Lower leg skin (tissue), 4 donors: ENCODE measurements at regions of chr3 and their contacts with region 1.

Region 1: DNA sequence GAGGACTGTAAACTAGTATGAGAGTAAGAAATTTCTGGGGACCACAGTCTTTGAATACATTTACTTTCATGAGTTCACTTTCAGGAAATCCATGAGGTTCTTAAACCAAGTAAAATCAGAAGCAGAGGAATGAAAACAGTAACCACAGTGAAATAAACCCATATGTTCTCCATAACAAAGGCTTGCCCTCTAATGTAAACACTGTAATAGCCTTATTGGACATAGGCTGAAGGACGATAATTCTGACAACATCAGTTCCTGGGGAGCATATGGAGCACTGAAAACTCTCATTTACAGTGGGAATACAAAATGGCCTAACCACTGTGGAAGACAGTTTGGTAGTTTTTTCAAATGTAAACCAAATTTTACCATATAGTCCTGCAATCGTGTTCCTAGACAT is 965.8 kb downstream of the NSUN3 start:
- DNase-seq: no peak
- H3K4me3 ChIP-seq: no peak overlapping the region
- CTCF ChIP-seq: no peak
- POLR2A ChIP-seq: no peak

Region 2: GRCh38 chr3:94876270-94876669 is 152.4 kb before region 1 on chr3:
- intact Hi-C with region 1: loop called (anchors 2 kb)
- DNase-seq: no peak
- H3K4me3 ChIP-seq: no peak overlapping the region
- CTCF ChIP-seq: no peak
- POLR2A ChIP-seq: no peak

Region 3: DNA sequence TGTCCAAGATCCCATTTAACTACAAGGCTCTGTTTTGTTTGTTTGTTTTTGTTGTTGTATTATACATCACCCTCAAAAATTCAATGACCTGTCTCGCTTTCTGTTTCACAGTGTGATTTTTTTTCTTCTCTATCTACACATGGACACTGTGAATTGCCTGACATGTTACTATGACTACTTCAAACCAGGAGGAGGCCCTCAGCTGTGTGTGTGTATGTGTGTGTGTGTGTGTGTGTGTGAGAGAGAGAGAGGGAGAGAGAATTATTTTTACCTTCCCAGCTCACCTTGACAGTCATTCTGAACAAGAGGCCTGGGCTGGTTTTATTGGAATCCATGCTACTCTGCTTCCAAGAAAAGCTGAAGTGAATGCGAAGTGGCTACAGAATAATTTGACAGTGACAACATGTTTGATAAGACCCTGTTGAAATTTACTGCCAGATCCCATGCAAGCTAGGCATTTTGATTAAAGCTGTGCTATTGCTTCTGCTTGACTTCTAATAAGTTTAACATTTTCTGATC is 124.5 kb before region 1 on chr3:
- intact Hi-C with region 1: no loop called
- DNase-seq: no peak
- H3K4me3 ChIP-seq: no peak overlapping the region
- CTCF ChIP-seq: no peak
- POLR2A ChIP-seq: no peak